Transverse colon (tissue), 4 donors: ENCODE measurements at regions of chr9 and their contacts with region 1.

Region 1: GRCh38 chr9:3261484-3261883 is 264.3 kb downstream of the RFX3 start:
- DNase-seq: no peak
- H3K4me3 ChIP-seq: no peak overlapping the region
- H3K27ac ChIP-seq: no peak overlapping the region
- H3K4me1 ChIP-seq: no peaks in the 10 kb centered on the region
- H3K27me3 ChIP-seq: no peaks in the 10 kb centered on the region
- CTCF ChIP-seq: no peak
- EP300 ChIP-seq: no peak
- POLR2A ChIP-seq: no peak

Region 2: DNA sequence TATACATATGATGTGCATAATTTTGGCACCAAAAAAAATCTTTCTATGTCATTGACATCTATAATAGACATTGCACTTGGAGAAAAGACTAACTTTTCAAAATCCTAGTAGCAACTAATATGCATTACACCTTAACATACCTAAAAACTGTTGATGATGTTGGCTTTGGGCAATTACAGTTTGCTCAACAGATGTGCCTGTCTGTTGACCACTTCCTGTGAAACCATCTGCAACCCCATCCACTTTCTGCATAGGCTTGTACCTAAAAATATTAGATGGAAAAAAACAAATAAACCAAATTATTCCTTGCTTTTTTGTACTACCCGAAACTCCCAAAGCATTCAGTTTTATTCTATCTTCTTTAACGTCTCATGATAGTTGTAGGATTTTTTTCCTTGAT is 15.7 kb after region 1 on chr9:
- in situ Hi-C with region 1: no loop called
- intact Hi-C with region 1: loop called (anchors 1 kb)
- DNase-seq: no peak
- H3K4me3 ChIP-seq: no peak overlapping the region
- H3K27ac ChIP-seq: no peak overlapping the region
- H3K4me1 ChIP-seq: no peaks in the 10 kb centered on the region
- H3K27me3 ChIP-seq: no peaks in the 10 kb centered on the region
- CTCF ChIP-seq: no peak
- EP300 ChIP-seq: no peak
- POLR2A ChIP-seq: no peak

Region 3: GRCh38 chr9:3578786-3579185 is 317.3 kb after region 1 on chr9:
- in situ Hi-C with region 1: no loop called
- intact Hi-C with region 1: loop called (anchors 5 kb)
- DNase-seq: no peak
- H3K4me3 ChIP-seq: no peak overlapping the region
- H3K27ac ChIP-seq: no peak overlapping the region
- H3K4me1 ChIP-seq: no peaks in the 10 kb centered on the region
- H3K27me3 ChIP-seq: no peaks in the 10 kb centered on the region
- CTCF ChIP-seq: no peak
- EP300 ChIP-seq: no peak
- POLR2A ChIP-seq: no peak